Breast epithelium (tissue), 4 donors: ENCODE measurements at regions of chr12 and their contacts with region 1.

Region 1: GRCh38 chr12:4099276-4099675 is 174.3 kb upstream of the CCND2 start:
- DNase-seq: no peak
- H3K4me3 ChIP-seq: no peak overlapping the region
- H3K27ac ChIP-seq: no peak overlapping the region
- H3K4me1 ChIP-seq: no peaks in the 10 kb centered on the region
- H3K27me3 ChIP-seq: no peaks in the 10 kb centered on the region
- CTCF ChIP-seq: no peak
- POLR2A ChIP-seq: no peak

Region 2: GRCh38 chr12:3587402-3588013 is 511.8 kb before region 1 on chr12:
- intact Hi-C with region 1: no loop called
- DNase-seq: no peak
- H3K4me3 ChIP-seq: no peak overlapping the region
- H3K27ac ChIP-seq: no peak overlapping the region
- H3K4me1 ChIP-seq: no peaks in the 10 kb centered on the region
- H3K27me3 ChIP-seq: no peaks in the 10 kb centered on the region
- CTCF ChIP-seq: no peak
- POLR2A ChIP-seq: no peak

Region 3: GRCh38 chr12:3863756-3864329 is 235.4 kb before region 1 on chr12:
- intact Hi-C with region 1: loop called (anchors 5 kb)
- DNase-seq: no peak
- H3K4me3 ChIP-seq: peak overlapping the region in 1 of 3 donors; percentile 8
- H3K27ac ChIP-seq: peak overlapping the region; percentile 48 to 67
- H3K4me1 ChIP-seq: no peaks in the 10 kb centered on the region
- H3K27me3 ChIP-seq: no peaks in the 10 kb centered on the region
- CTCF ChIP-seq: no peak
- POLR2A ChIP-seq: no peak

Region 4: DNA sequence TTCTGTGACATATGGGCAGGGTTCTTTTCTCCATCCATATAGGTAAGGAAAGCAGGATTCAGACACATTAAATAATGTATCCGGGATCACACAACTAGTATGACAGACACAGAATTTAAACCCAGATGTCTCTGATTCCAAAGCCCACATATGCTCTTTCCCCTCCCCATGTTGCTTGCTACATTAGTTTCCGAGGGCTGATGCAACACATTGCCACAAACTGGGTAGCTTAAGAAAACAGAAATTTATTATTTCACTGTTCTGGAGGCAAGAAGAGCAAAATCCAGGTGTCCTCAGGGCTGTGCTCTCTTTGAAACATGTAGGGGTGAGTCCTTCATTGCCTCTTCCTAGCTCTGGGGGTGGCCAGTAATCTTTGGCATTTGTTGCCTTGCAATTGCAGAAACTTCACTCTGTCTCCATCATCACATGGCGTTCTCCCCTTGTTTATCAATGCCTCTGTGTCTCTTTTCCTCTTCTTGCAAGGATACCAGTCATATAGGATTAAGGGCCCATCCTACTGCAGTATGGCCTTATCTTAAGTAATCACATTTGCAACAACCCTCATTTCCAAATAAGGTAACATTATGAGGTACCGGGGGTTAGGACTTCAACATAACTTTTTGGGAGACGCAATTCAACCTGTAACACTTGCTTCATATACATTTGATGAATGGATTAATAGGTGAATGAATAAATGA is 91.2 kb after region 1 on chr12:
- intact Hi-C with region 1: no loop called
- DNase-seq: no peak
- H3K4me3 ChIP-seq: no peak overlapping the region
- H3K27ac ChIP-seq: no peak overlapping the region
- H3K4me1 ChIP-seq: no peaks in the 10 kb centered on the region
- H3K27me3 ChIP-seq: no peaks in the 10 kb centered on the region
- CTCF ChIP-seq: no peak
- POLR2A ChIP-seq: no peak

Region 5: GRCh38 chr12:4417455-4417854 is 318.2 kb after region 1 on chr12:
- intact Hi-C with region 1: no loop called
- DNase-seq: no peak
- H3K4me3 ChIP-seq: no peak overlapping the region
- H3K27ac ChIP-seq: no peak overlapping the region
- H3K4me1 ChIP-seq: no peaks in the 10 kb centered on the region
- H3K27me3 ChIP-seq: peaks cover 0 to 28% of the 10 kb centered on the region in 2 donors
- CTCF ChIP-seq: no peak
- POLR2A ChIP-seq: no peak